MCF 10A (cell line): ENCODE measurements at regions of chr1 and their contacts with region 1.

Region 1: DNA sequence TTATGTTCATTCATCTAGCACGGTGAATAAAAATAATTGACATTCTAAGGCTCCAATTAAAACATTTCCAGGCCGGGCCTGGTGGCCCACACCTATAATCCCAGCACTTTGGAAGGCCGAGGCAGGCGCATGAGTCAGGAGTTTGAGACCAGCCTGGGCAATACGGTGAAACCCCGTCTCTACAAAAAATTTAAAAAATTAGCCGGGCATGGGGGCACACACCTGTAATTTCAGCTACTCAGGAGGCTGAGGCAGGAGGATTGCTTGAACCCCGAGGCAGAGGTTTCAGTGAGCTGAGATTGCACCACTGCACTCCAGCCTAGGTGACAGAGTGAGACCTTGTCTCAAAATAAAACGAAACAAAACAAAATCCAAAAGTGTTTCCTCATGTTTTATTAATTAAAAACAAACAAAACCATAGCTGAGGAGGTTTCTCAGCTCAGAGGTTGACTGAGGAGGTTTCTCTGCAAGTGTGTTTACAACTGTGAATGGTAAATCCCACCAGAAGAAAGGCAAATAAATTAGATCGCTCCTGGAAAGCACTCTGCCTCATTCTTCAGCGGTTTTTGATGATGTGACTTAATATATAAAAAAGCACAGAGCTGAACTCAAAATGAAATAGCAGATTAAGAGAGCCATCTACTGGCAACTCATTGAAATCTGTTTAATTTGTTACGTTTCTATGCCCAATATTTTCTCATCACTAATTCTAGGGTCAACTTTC is 37.7 kb upstream of the ATG4C start:
- DNase-seq: peak; percentile 58
- H3K4me3 Mint-ChIP-seq: no peak overlapping the region
- H3K27ac Mint-ChIP-seq: no peak overlapping the region
- H3K4me1 Mint-ChIP-seq: no peaks in the 10 kb centered on the region
- H3K27me3 Mint-ChIP-seq: peaks cover 2% of the 10 kb centered on the region
- CTCF ChIP-seq: peak; percentile 51

Region 2: GRCh38 chr1:60969971-60970509 is 1776.2 kb before region 1 on chr1:
- CTCF ChIA-PET with region 1: no interaction called
- POLR2A ChIA-PET with region 1: no interaction called
- intact Hi-C with region 1: loop called (anchors 5 kb)
- DNase-seq: peak; percentile 43
- H3K4me3 Mint-ChIP-seq: no peak overlapping the region
- H3K27ac Mint-ChIP-seq: no peak overlapping the region
- H3K4me1 Mint-ChIP-seq: peaks cover 18% of the 10 kb centered on the region
- H3K27me3 Mint-ChIP-seq: no peaks in the 10 kb centered on the region
- CTCF ChIP-seq: peak; percentile 46

Region 3: DNA sequence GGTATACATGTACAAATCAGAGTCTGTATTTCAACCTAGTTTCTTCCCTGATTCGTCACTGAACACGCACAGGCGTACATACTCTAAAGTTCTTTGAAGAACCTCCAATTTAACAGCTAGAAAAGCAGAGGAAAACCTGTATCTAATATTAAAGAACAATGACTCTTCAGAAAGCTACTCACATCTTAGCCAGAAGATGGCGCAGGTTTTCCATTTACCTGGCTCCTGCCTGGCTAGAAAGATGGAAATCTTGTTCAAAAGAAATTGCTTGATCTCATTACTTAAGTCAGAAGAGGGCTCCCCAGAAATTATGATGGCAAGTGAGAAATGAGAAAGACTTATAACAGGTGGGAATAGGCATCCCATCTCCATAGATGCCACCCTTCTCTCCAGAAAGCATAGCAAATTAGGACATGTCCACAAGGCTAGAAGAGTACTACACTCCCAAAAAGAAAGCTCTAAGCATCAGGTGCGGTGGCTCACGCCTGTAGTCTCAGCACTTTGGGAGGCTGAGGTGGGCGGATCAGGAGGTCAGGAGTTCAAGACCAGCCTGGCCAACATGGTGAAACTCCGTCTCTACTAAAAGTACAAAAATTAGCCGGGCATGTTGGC is 570.6 kb before region 1 on chr1:
- CTCF ChIA-PET with region 1: interaction called, 21 read pairs
- POLR2A ChIA-PET with region 1: no interaction called
- intact Hi-C with region 1: loop called (anchors 1 kb)
- DNase-seq: peak; percentile 72
- H3K4me3 Mint-ChIP-seq: no peak overlapping the region
- H3K27ac Mint-ChIP-seq: no peak overlapping the region
- H3K4me1 Mint-ChIP-seq: no peaks in the 10 kb centered on the region
- H3K27me3 Mint-ChIP-seq: no peaks in the 10 kb centered on the region
- CTCF ChIP-seq: peak; percentile 70

Region 4: DNA sequence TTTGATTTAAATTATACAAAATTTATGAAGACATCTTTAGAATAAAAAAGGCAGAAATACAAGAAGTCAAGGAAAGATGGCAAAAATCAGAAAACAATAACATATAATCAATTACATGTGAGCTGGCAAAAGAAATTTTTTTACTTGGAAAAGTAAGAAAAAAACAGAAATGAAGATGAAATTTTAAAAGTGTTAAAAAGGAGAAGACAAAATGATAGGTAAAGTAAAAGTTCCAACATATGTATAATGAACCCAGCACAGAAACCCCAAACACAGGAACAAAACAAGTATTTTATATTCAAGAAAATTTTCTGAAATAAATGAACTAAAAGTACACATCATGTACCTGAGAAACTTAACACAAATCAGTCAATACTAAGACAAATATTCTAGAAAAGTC is 246.0 kb before region 1 on chr1:
- CTCF ChIA-PET with region 1: interaction called, 115 read pairs
- POLR2A ChIA-PET with region 1: no interaction called
- intact Hi-C with region 1: no loop called
- DNase-seq: no peak
- H3K4me3 Mint-ChIP-seq: no peak overlapping the region
- H3K27ac Mint-ChIP-seq: no peak overlapping the region
- H3K4me1 Mint-ChIP-seq: no peaks in the 10 kb centered on the region
- H3K27me3 Mint-ChIP-seq: no peaks in the 10 kb centered on the region
- CTCF ChIP-seq: no peak

Region 5: GRCh38 chr1:62514746-62515423 is 231.4 kb before region 1 on chr1:
- CTCF ChIA-PET with region 1: interaction called, 115 read pairs
- POLR2A ChIA-PET with region 1: interaction called, 21 read pairs
- intact Hi-C with region 1: no loop called
- DNase-seq: peak; percentile 64
- H3K4me3 Mint-ChIP-seq: no peak overlapping the region
- H3K27ac Mint-ChIP-seq: no peak overlapping the region
- H3K4me1 Mint-ChIP-seq: no peaks in the 10 kb centered on the region
- H3K27me3 Mint-ChIP-seq: no peaks in the 10 kb centered on the region
- CTCF ChIP-seq: no peak

Region 6: GRCh38 chr1:62687903-62688686 is 58.2 kb before region 1 on chr1 and contains the start of gene DOCK7:
- CTCF ChIA-PET with region 1: interaction called, 10 read pairs
- POLR2A ChIA-PET with region 1: interaction called, 3 read pairs
- intact Hi-C with region 1: loop called (anchors 2 kb)
- DNase-seq: peak; percentile 82
- H3K4me3 Mint-ChIP-seq: peak within 1 kb of the TSS; percentile 91
- H3K27ac Mint-ChIP-seq: peak within 1 kb of the TSS; percentile 70
- H3K4me1 Mint-ChIP-seq: peaks cover 34% of the 10 kb centered on the region
- H3K27me3 Mint-ChIP-seq: no peaks in the 10 kb centered on the region
- CTCF ChIP-seq: no peak
- total RNA-seq, gene DOCK7: 46.9 and 49.7 TPM in 2 replicates

Region 7: DNA sequence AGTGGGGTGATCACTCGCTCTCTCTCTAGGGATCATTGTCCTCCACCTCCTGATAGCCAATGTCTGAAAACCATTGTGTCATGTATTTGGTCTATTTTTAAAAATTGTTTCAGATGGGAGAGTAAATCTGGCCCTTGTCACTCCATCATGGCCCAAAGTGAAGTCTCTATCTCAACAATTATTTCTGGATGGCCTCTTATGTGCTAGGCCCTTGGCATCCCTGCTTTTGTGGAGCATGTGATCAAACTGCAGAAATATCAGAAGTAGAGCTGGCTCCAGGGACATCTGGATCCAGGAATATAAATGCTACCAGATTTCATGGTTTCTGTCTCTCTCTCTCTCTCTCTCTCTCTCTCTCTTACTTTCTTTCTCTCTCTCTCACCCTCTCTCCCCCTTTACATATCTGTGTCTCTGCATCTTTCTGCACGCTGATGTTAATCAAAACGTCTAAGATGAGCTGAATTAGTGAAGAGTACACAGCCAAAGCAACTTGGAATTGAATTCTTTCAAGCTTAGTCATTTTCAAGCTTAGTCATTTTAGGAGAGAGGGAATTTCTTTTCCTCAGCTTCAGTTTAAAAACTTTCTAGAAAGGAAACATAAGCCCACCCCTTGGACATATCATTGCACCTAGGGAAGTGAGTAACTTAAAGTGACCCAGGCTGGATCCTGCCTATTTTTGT is 10.6 kb before region 1 on chr1:
- CTCF ChIA-PET with region 1: interaction called, 21 read pairs
- POLR2A ChIA-PET with region 1: no interaction called
- intact Hi-C with region 1: no loop called
- DNase-seq: peak; percentile 13
- H3K4me3 Mint-ChIP-seq: no peak overlapping the region
- H3K27ac Mint-ChIP-seq: no peak overlapping the region
- H3K4me1 Mint-ChIP-seq: peaks cover 6% of the 10 kb centered on the region
- H3K27me3 Mint-ChIP-seq: peaks cover 5% of the 10 kb centered on the region
- CTCF ChIP-seq: no peak

Region 8: GRCh38 chr1:62823556-62823955 is 77.3 kb after region 1 on chr1:
- CTCF ChIA-PET with region 1: no interaction called
- POLR2A ChIA-PET with region 1: no interaction called
- intact Hi-C with region 1: no loop called
- DNase-seq: no peak
- H3K4me3 Mint-ChIP-seq: no peak overlapping the region
- H3K27ac Mint-ChIP-seq: no peak overlapping the region
- H3K4me1 Mint-ChIP-seq: no peaks in the 10 kb centered on the region
- H3K27me3 Mint-ChIP-seq: no peaks in the 10 kb centered on the region
- CTCF ChIP-seq: no peak

Region 9: DNA sequence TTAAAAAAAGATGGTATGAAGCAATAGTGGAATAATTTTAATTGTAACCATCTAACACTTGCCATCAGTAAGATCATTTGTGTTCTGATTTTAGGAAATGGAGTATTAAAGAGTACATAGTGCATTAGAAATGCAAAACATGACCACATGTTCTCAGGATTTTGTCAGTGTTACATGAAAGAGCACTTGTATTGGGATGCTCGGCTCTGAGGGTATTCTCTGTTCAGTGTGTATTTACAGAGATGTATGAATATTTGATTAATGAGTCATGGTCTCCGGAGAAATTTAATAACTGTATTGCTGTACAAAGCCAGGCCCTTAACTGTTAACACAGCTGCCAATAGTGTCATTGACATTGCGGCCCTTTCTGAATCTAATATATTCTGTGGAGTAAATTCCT is 129.4 kb after region 1 on chr1:
- CTCF ChIA-PET with region 1: no interaction called
- POLR2A ChIA-PET with region 1: no interaction called
- intact Hi-C with region 1: no loop called
- DNase-seq: no peak
- H3K4me3 Mint-ChIP-seq: no peak overlapping the region
- H3K27ac Mint-ChIP-seq: no peak overlapping the region
- H3K4me1 Mint-ChIP-seq: no peaks in the 10 kb centered on the region
- H3K27me3 Mint-ChIP-seq: no peaks in the 10 kb centered on the region
- CTCF ChIP-seq: no peak